Dendritic cell treated with granulocyte-macrophage colony-stimulating factor and Interleukin-4, amounts not matched to agents 40 ng/mL and 50 ng/mL, for 4 days (primary cell): ENCODE measurements at regions of chr13 and their contacts with region 1.

Region 1: DNA sequence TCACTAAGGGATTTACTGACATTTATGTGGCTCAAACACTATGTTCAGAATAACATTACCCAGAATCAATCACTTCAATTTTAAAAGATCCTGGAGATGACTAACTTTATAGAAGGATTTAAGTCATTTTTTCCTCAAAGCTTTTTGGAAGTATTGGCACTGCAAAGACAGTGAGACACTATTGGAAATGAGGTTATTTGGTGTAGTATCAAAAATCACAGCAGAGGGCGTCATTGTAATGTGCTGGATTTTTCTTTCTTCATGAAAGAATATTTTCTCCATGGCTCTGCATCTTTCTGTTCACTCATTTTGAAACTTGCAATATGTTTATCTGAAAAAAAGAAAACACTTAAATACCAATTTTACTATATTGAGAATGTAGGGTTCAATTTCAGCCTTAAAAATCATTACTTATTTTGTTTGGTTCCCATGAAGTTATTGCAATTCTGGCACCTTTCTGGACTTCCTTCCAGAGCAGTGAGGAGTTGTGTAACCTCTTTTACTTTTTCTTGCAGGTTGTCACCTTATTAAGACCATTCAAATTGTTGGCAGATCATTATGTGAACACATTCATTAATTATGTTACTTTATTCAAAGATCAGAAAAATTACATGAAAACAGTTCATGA is 3.7 kb upstream of the CSNK1A1L start:
- H3K4me3 Mint-ChIP-seq: no peak overlapping the region
- H3K27ac Mint-ChIP-seq: no peak overlapping the region
- H3K4me1 Mint-ChIP-seq: no peaks in the 10 kb centered on the region
- H3K27me3 Mint-ChIP-seq: peaks cover 6% of the 10 kb centered on the region

Region 2: GRCh38 chr13:37481011-37481884 is 372.1 kb after region 1 on chr13:
- intact Hi-C with region 1: no loop called
- H3K4me3 Mint-ChIP-seq: no peak overlapping the region
- H3K27ac Mint-ChIP-seq: no peak overlapping the region
- H3K4me1 Mint-ChIP-seq: no peaks in the 10 kb centered on the region
- H3K27me3 Mint-ChIP-seq: no peaks in the 10 kb centered on the region

Region 3: GRCh38 chr13:37602747-37603381 is 493.7 kb after region 1 on chr13:
- intact Hi-C with region 1: loop called (anchors 10 kb)
- H3K4me3 Mint-ChIP-seq: no peak overlapping the region
- H3K27ac Mint-ChIP-seq: no peak overlapping the region
- H3K4me1 Mint-ChIP-seq: no peaks in the 10 kb centered on the region
- H3K27me3 Mint-ChIP-seq: no peaks in the 10 kb centered on the region